Endothelial cell of umbilical vein (primary cell): ENCODE measurements at regions of chr11 and their contacts with region 1.

Region 1: GRCh38 chr11:76734456-76735420 is 48.4 kb upstream of the TSKU start:
- DNase-seq: no peak
- H3K4me3 ChIP-seq: no peak overlapping the region
- H3K27ac ChIP-seq: no peak overlapping the region
- H3K4me1 ChIP-seq: peaks cover 5% of the 10 kb centered on the region
- H3K27me3 ChIP-seq: peaks cover 0 to 4% of the 10 kb centered on the region in 2 experiments
- CTCF ChIP-seq: no peak
- POLR2A ChIP-seq: no peak

Region 2: GRCh38 chr11:76768088-76768908 is 33.6 kb after region 1 on chr11:
- CTCF ChIA-PET with region 1: interaction called, 7 read pairs
- POLR2A ChIA-PET with region 1: no interaction called
- dilution Hi-C with region 1: no loop called
- intact Hi-C with region 1: loop called (anchors 2 kb)
- DNase-seq: peak; percentile 71
- H3K4me3 ChIP-seq: no peak overlapping the region
- H3K27ac ChIP-seq: no peak overlapping the region
- H3K4me1 ChIP-seq: peaks cover 22% of the 10 kb centered on the region
- H3K27me3 ChIP-seq: no peaks in the 10 kb centered on the region
- CTCF ChIP-seq: no peak
- POLR2A ChIP-seq: no peak

Region 3: DNA sequence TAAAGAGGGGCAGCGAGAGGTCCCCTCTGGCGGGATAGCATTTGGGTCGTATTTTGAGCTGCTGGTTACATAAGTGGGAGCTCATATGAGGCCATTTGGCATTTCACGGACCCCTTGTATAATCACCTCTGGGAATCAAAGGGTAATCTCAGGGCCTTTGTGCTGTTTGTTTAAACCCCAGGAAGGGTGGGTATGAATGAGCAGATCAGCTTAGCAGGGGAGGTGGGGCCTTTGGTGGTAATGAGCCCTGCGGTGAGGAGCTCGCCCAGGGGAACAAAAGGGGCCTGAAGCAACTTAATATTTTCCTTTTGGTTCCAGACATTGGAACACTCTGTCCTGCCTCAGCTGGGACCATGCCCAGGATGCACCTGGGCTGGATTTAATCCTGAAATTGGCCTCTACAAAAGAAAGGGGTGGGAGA is 58.7 kb after region 1 on chr11:
- CTCF ChIA-PET with region 1: interaction called, 287 read pairs
- POLR2A ChIA-PET with region 1: no interaction called
- dilution Hi-C with region 1: no loop called
- intact Hi-C with region 1: no loop called
- DNase-seq: no peak
- H3K4me3 ChIP-seq: no peak overlapping the region
- H3K27ac ChIP-seq: no peak overlapping the region
- H3K4me1 ChIP-seq: no peaks in the 10 kb centered on the region
- H3K27me3 ChIP-seq: no peaks in the 10 kb centered on the region
- CTCF ChIP-seq: no peak
- POLR2A ChIP-seq: no peak

Region 4: DNA sequence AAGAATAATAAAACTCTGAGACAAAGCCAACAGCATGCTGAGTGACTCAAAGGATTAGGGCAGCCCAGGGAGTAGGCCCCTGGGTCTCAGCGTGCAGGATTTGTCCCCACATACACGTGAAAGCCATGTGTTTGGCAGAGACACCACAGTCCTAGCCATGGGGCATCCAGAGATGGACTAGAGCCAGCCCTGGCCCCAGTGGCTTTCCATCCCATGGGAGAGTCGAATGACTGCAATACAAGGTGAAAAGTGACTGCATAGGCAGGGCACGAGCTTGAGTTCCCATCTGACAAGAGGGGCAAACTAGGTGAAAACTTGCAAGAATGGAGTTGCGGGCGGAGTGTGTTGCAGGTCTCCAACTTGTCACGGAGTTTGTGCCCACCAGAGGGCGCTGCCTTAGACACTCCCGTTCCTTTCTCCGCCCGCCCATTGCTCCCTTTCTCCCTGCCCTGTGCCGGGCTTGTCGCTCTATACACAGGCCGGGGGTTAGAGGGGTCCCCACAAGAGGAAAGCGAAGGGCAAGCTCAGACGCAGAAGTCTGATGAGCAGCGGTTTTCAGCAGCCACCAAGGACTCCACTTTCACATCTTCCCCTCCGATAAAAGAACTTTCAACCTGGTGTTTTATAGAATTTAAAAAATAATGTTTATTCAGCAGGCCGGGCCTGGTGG is 72.6 kb after region 1 on chr11:
- CTCF ChIA-PET with region 1: interaction called, 287 read pairs
- POLR2A ChIA-PET with region 1: no interaction called
- dilution Hi-C with region 1: no loop called
- intact Hi-C with region 1: loop called (anchors 2 kb)
- DNase-seq: peak; percentile 76
- H3K4me3 ChIP-seq: no peak overlapping the region
- H3K27ac ChIP-seq: no peak overlapping the region
- H3K4me1 ChIP-seq: peaks cover 3% of the 10 kb centered on the region
- H3K27me3 ChIP-seq: no peaks in the 10 kb centered on the region
- CTCF ChIP-seq: peak; percentile 80 to 87
- POLR2A ChIP-seq: no peak

Region 5: GRCh38 chr11:77039491-77040400 is 305.0 kb after region 1 on chr11:
- CTCF ChIA-PET with region 1: interaction called, 8 read pairs
- POLR2A ChIA-PET with region 1: no interaction called
- dilution Hi-C with region 1: no loop called
- intact Hi-C with region 1: loop called (anchors 2 kb)
- DNase-seq: peak; percentile 53
- H3K4me3 ChIP-seq: peak overlapping the region in 2 of 3 experiments; percentile 8 to 36
- H3K27ac ChIP-seq: no peak overlapping the region
- H3K4me1 ChIP-seq: peaks cover 2% of the 10 kb centered on the region
- H3K27me3 ChIP-seq: peaks cover 8 to 11% of the 10 kb centered on the region in 2 experiments
- CTCF ChIP-seq: peak; percentile 48 to 70
- POLR2A ChIP-seq: no peak